ENCODE measurements at regions of chr11 and their contacts with region 1.

Region 1: GRCh38 chr11:1908618-1909017 is 10.9 kb upstream of the TNNT3 start:
- DNase-seq: no peak
- ATAC-seq: peak in 1 of 4 donors; percentile 32
- H3K4me3 ChIP-seq: peak overlapping the region; percentile 2
- H3K27ac ChIP-seq: peak overlapping the region; percentile 74
- H3K4me1 ChIP-seq: peaks cover 2% of the 10 kb centered on the region
- H3K27me3 ChIP-seq: no peaks in the 10 kb centered on the region
- CTCF ChIP-seq: no peak

Region 2: DNA sequence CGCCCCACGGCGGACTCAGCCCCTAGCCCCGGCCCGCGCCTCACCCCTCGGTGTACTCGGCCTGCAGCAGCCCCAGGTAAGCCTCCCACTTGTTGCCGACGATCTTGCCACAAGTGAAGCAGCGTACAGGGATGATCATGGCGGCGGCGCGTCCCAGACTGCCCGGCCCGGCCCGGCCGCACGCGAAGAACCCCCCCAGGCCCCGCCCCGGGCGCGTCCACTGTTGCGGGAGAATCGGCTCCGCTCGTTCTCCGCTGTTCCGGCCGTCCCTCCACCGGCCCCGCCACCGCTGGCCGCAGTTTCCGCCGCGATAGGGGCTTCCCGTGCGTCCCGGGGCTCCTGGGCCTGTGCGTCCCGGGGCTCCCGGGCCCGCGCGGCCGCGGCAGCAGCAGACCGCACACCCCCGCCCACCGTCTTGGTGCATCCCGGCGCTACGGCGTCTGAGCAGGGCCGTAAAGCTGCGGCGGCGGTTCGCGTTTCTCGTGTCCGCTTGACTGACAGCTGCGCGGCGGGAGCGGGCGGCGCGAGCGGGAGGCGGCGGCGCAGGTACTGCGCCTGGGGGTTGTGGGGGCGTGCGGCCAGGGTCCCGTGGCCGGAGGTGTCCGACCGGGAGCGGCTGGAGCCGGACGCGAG is 1066.1 kb before region 1 on chr11 and contains the starts of genes POLR2L and TSPAN4:
- intact Hi-C with region 1: no loop called
- DNase-seq: peak; percentile 93 to 97
- ATAC-seq: peak; percentile 69 to 79 (median 74)
- H3K4me3 ChIP-seq: peak within 1 kb of the TSS; percentile 93
- H3K27ac ChIP-seq: peak within 1 kb of the TSS; percentile 94
- H3K4me1 ChIP-seq: peaks cover 41% of the 10 kb centered on the region
- H3K27me3 ChIP-seq: no peaks in the 10 kb centered on the region
- CTCF ChIP-seq: no peak
- total RNA-seq, gene POLR2L: 113 to 205 (median 156) TPM
- total RNA-seq, gene TSPAN4: 13.9 to 22.1 (median 16.8) TPM

Region 3: DNA sequence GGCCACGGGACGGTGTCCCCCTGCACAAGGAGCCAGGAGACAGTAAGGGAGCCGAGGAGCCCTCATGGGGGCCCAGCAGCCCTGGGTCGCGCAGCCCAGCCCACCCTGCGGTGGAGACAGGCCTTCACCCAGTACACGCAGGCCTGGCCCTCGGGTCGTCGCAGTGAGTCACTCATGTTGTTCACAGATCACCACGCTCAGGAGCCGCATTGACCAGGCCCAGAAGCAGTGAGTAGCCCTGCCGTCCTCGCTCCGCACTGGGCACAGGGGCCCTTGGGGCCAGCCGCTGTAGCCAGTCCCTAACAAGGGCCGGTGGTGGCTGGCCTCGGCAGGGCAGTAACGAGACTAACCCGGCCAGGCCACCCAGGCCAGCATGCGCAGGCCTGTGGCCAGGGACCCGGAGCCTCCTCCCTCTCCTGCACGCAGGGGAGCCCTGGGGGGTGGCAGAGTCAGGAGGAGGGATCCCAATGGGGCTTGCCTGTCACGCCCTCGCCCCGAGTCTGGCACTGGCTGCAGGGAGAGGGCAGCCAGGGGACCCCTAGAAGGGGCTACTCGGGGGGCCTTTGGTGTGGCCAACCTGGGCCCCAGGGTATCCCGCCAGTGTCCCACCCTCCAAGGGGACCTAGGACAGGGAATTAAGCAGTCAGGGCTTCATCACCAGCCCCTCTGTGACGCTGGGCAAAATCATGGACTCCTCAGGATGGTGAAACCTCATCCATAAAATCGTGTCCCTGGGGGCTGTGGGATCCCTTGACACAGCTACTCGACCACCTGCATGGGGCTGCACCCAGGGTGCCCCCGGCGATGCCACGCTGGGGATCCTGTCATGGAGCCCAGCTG is 28.4 kb after region 1 on chr11:
- intact Hi-C with region 1: loop called (anchors 1 kb)
- DNase-seq: peak; percentile 13 to 58
- ATAC-seq: peak in 2 of 4 donors; percentile 8 to 15
- H3K4me3 ChIP-seq: no peak overlapping the region
- H3K27ac ChIP-seq: no peak overlapping the region
- H3K4me1 ChIP-seq: peaks cover 2% of the 10 kb centered on the region
- H3K27me3 ChIP-seq: no peaks in the 10 kb centered on the region
- CTCF ChIP-seq: no peak

Region 4: GRCh38 chr11:2122222-2123085 is 213.8 kb after region 1 on chr11:
- intact Hi-C with region 1: no loop called
- DNase-seq: peak in 1 of 2 donors; percentile 32
- ATAC-seq: no peak
- H3K4me3 ChIP-seq: no peak overlapping the region
- H3K27ac ChIP-seq: no peak overlapping the region
- H3K4me1 ChIP-seq: no peaks in the 10 kb centered on the region
- H3K27me3 ChIP-seq: peaks cover 0 to 16% (median 2%) of the 10 kb centered on the region in 3 donors
- CTCF ChIP-seq: no peak

Region 5: DNA sequence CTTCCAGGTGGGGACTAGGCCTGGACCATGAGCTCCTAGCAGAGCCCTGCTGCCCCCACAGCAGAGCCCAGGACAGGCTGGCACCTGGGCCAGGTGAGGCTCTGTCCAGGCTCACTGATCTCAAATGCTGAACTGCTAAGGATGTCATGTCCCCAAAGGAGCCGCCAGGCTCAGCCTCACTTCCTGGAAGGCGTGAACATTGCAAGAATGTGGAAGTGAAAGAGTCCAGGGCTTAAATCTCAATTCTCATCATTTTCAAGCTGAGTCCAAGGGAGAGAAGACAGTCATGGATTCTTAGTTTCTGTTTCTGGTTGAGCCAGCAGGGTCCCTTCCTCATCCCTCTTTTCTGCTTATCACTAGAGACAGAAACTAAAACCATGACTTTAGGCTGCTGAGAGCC is 356.8 kb after region 1 on chr11:
- intact Hi-C with region 1: no loop called
- DNase-seq: peak in 1 of 2 donors; percentile 54
- ATAC-seq: no peak
- H3K4me3 ChIP-seq: no peak overlapping the region
- H3K27ac ChIP-seq: no peak overlapping the region
- H3K4me1 ChIP-seq: peaks cover 3% of the 10 kb centered on the region
- H3K27me3 ChIP-seq: peaks cover 0 to 75% (median 22%) of the 10 kb centered on the region in 3 donors
- CTCF ChIP-seq: no peak

Measured in psoas muscle (tissue), 8 donors.